Caco-2 (cell line): ENCODE measurements at regions of chr17 and their contacts with region 1.

Region 1: DNA sequence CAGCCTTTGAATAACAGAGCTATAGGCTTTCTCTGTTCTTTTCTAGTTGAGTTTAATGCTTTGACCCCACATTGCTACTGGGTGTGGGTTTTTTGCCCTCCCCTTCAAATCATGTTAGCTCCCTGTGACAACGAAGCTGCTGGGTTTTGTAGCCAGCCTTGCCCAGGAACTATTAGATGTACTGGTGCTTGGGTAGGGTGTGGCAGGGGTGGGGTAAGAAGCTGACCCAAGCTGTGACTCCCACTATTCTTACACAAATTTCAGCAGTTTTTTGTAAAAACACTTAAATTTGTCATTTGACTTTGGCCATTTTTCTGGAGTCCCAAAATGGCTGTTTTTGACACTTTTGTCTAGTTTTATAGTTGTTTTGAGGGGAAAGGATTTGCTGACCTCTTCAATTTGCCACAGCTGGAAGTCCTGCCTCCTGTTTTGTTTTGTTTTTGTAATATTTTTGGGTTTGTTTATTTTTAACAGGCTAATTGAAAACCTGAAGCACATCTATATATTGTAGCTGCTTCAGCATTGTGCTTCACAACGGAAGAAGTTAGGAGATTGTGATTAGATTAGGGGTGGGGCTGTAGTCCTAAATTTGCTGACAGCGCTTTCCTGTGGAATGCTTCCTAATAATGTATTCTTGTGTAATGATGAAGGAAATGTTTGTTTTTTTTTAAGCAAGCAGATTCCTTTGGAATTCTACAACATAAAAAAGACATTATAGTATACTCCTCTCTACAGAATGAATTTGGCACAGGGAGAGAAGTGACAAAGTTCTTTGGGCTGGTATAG is 69.9 kb downstream of the NLK start:
- DNase-seq: no peak
- H3K4me3 ChIP-seq: no peak overlapping the region
- H3K4me3 Mint-ChIP-seq: no peak overlapping the region
- H3K27ac Mint-ChIP-seq: no peak overlapping the region
- H3K4me1 ChIP-seq: peaks cover 28% of the 10 kb centered on the region
- H3K4me1 Mint-ChIP-seq: peaks cover 31% of the 10 kb centered on the region
- H3K27me3 ChIP-seq: no peaks in the 10 kb centered on the region
- H3K27me3 Mint-ChIP-seq: no peaks in the 10 kb centered on the region
- CTCF ChIP-seq: no peak

Region 2: GRCh38 chr17:28125530-28126378 is 13.3 kb after region 1 on chr17:
- CTCF ChIA-PET with region 1: no interaction called
- POLR2A ChIA-PET with region 1: interaction called, 4 read pairs
- intact Hi-C with region 1: loop called (anchors 1 kb)
- DNase-seq: peak in 1 of 2 experiments; percentile 55
- H3K4me3 ChIP-seq: no peak overlapping the region
- H3K4me3 Mint-ChIP-seq: peak overlapping the region; percentile 46
- H3K27ac Mint-ChIP-seq: no peak overlapping the region
- H3K4me1 ChIP-seq: peaks cover 30% of the 10 kb centered on the region
- H3K4me1 Mint-ChIP-seq: peaks cover 43% of the 10 kb centered on the region
- H3K27me3 ChIP-seq: no peaks in the 10 kb centered on the region
- H3K27me3 Mint-ChIP-seq: no peaks in the 10 kb centered on the region
- CTCF ChIP-seq: no peak

Region 3: DNA sequence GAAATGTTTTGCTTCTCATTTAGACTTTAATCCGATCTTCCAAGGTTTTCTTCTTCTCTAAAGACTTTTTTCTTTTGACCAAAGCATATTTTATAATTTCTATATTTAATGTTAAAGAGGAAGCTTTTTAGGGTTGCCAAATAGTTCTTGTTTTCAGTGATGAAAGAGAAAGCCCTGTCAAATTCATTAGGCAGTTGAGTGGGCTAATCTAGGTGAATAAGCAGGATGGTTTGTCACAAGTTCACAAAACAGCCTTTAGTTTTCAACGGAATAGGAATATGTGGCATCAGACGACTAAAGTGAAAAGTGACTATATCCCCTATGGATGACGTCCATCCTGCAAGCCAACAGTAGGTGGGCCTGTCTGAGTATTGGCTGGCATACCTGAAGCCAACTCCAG is 48.9 kb after region 1 on chr17:
- CTCF ChIA-PET with region 1: no interaction called
- POLR2A ChIA-PET with region 1: no interaction called
- intact Hi-C with region 1: loop called (anchors 5 kb)
- DNase-seq: no peak
- H3K4me3 ChIP-seq: no peak overlapping the region
- H3K4me3 Mint-ChIP-seq: no peak overlapping the region
- H3K27ac Mint-ChIP-seq: no peak overlapping the region
- H3K4me1 ChIP-seq: peaks cover 6% of the 10 kb centered on the region; the same call in 1 of the 2 replicates
- H3K4me1 Mint-ChIP-seq: peaks cover 23% of the 10 kb centered on the region
- H3K27me3 ChIP-seq: no peaks in the 10 kb centered on the region
- H3K27me3 Mint-ChIP-seq: no peaks in the 10 kb centered on the region
- CTCF ChIP-seq: no peak